Psoas muscle (tissue), 8 donors: ENCODE measurements at regions of chr12 and their contacts with region 1.

Region 1: GRCh38 chr12:29073628-29074239 is 75.3 kb upstream of the FAR2 start:
- DNase-seq: no peak
- ATAC-seq: peak in 3 of 4 donors; percentile 48 to 54 (median 50)
- H3K4me3 ChIP-seq: no peak overlapping the region
- H3K27ac ChIP-seq: no peak overlapping the region
- H3K4me1 ChIP-seq: no peaks in the 10 kb centered on the region
- H3K27me3 ChIP-seq: no peaks in the 10 kb centered on the region
- CTCF ChIP-seq: peak; percentile 51

Region 2: GRCh38 chr12:29041621-29042020 is 32.1 kb before region 1 on chr12:
- intact Hi-C with region 1: no loop called
- DNase-seq: no peak
- ATAC-seq: no peak
- H3K4me3 ChIP-seq: no peak overlapping the region
- H3K27ac ChIP-seq: no peak overlapping the region
- H3K4me1 ChIP-seq: no peaks in the 10 kb centered on the region
- H3K27me3 ChIP-seq: no peaks in the 10 kb centered on the region
- CTCF ChIP-seq: no peak

Region 3: DNA sequence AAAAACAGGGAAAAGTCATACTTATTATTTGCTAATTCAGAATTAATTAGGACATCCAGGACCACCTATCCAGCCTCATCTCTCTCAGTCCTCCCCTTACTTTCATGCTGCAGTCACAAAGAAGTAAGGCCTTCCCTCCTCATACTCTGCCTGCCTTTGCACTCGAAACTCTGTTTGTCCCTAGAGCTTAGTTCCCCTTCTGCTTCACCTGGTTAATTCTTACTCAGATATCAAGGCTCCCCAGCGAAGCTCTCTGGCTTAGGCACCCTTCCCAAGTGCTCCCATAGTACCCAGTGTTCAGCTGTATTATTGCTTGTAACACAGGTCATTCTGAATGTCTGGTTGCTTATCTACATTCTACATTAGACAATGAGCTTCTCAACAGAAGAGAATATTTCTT is 225.9 kb after region 1 on chr12:
- intact Hi-C with region 1: loop called in 1 of 2 experiments (anchors 5 kb)
- DNase-seq: no peak
- ATAC-seq: no peak
- H3K4me3 ChIP-seq: no peak overlapping the region
- H3K27ac ChIP-seq: no peak overlapping the region
- H3K4me1 ChIP-seq: no peaks in the 10 kb centered on the region
- H3K27me3 ChIP-seq: no peaks in the 10 kb centered on the region
- CTCF ChIP-seq: no peak

Region 4: DNA sequence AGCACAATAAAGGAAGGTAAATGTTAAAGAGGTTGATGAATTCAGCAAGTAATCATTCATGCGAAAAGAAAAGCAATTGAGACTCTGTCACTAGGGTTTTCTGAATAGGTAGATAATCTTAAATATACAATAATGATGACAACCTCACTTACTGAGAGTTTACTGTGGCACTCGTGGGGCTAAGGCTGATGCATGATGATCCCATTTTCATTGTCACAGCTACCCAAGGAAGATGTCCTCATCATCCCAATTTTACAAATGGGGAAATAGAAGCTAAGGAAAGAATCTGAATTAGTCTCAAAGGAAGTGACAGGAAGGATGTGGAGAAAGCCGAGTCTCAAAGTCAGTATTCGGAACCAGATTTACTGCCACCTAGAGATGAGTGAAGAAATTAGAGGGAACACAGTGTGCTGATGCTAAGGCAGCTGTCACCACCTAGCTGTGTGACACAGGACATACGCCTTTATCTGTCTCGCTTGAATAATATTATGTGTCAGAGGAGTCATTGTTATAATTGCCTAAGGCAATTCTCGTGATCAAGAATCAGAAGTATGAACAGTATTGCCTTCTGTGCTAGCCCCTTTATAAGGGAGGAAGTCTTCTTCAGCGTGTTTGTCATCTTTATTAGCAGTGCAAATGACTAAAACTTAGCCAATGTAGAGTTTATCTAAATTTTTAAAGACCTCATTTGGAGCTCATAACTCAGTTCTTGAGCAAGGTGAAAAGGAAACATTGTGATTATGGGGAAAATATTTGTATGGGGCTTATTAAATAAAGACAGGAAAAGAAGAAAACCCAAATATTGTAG is 244.0 kb after region 1 on chr12:
- intact Hi-C with region 1: loop called (anchors 2 to 5 kb)
- DNase-seq: peak in 1 of 2 donors; percentile 19
- ATAC-seq: peak; percentile 88 to 99 (median 99)
- H3K4me3 ChIP-seq: no peak overlapping the region
- H3K27ac ChIP-seq: no peak overlapping the region
- H3K4me1 ChIP-seq: peaks cover 12% of the 10 kb centered on the region
- H3K27me3 ChIP-seq: no peaks in the 10 kb centered on the region
- CTCF ChIP-seq: peak; percentile 75